Gastrocnemius medialis (tissue), 4 donors: ENCODE measurements at regions of chr16 and their contacts with region 1.

Region 1: DNA sequence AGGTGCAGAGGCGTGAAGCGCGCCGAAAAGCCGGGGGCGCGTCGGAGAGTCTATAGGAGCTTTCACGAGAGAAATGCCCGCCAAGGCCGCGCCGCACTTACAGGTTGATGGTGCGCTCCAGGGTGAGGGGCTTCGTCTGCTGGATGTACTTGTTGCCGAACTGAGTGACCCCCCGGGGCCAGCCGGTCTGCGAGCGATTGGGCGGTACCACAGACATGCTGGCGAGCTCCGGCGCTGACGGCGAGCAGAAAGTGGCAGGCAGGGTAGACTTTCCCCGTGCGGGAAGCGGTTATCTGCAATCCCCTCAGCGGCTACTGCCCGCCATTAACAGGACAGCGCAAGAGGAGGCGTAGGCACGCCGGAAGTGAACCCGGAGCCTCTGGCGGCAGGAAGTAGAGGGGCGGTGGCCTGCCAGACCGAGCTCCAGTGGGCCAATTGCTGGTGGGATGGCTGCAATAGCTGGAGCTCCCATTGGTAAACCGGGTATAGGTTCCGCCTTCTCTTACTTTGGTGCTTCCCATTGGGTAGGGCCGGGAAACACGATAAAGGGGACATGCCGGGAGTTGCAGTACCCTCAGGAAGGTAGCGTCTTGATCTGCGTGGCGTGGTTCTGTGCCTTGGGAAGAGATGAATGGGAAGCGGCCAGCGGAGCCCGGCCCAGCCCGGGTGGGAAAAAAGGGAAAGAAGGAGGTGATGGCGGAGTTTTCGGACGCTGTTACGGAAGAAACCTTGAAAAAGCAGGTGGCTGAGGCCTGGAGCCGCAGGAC is at the starts of genes NUDT21 and OGFOD1:
- DNase-seq: peak; percentile 98
- ATAC-seq: peak; percentile 97 to 98
- H3K4me3 ChIP-seq: peak within 1 kb of the TSS; percentile 87 to 99 (median 92)
- H3K27ac ChIP-seq: peak within 1 kb of the TSS; percentile 85 to 96 (median 94)
- H3K4me1 ChIP-seq: peaks cover 34 to 36% of the 10 kb centered on the region in 2 donors
- H3K27me3 ChIP-seq: no peaks in the 10 kb centered on the region
- CTCF ChIP-seq: no peak
- POLR2A ChIP-seq: peak; percentile 76 to 89
- total RNA-seq, gene NUDT21: 24.3 to 71.5 (median 35.9) TPM
- total RNA-seq, gene OGFOD1: 86.1 to 115 (median 92.9) TPM

Region 2: GRCh38 chr16:55842369-55843104 is 608.6 kb before region 1 on chr16:
- in situ Hi-C with region 1: no loop called
- intact Hi-C with region 1: no loop called
- DNase-seq: no peak
- ATAC-seq: peak; percentile 55 to 69
- H3K4me3 ChIP-seq: no peak overlapping the region
- H3K27ac ChIP-seq: no peak overlapping the region
- H3K4me1 ChIP-seq: no peaks in the 10 kb centered on the region
- H3K27me3 ChIP-seq: peaks cover 0 to 10% (median 3%) of the 10 kb centered on the region in 3 donors
- CTCF ChIP-seq: peak; percentile 57 to 75 (median 61)
- POLR2A ChIP-seq: no peak

Region 3: GRCh38 chr16:56425439-56425832 is 25.7 kb before region 1 on chr16 and contains the start of gene AMFR:
- in situ Hi-C with region 1: no loop called
- intact Hi-C with region 1: loop called (anchors 1 kb)
- DNase-seq: peak; percentile 31 to 84
- ATAC-seq: peak; percentile 88 to 90
- H3K4me3 ChIP-seq: peak within 1 kb of the TSS; percentile 74 to 96 (median 92)
- H3K27ac ChIP-seq: peak within 1 kb of the TSS; percentile 87 to 96 (median 96)
- H3K4me1 ChIP-seq: peaks cover 36 to 37% of the 10 kb centered on the region in 2 donors
- H3K27me3 ChIP-seq: no peaks in the 10 kb centered on the region
- CTCF ChIP-seq: peak in 4 of 5 experiments; percentile 78 to 86 (median 82)
- POLR2A ChIP-seq: peak; percentile 55 to 75
- total RNA-seq, gene AMFR: 349 to 951 (median 571) TPM

Region 4: GRCh38 chr16:56481468-56482112 is 30.4 kb after region 1 on chr16:
- in situ Hi-C with region 1: no loop called
- intact Hi-C with region 1: loop called (anchors 2 kb)
- DNase-seq: peak; percentile 83 to 89
- ATAC-seq: peak; percentile 86 to 91
- H3K4me3 ChIP-seq: no peak overlapping the region
- H3K27ac ChIP-seq: peak overlapping the region; percentile 92 to 98 (median 94)
- H3K4me1 ChIP-seq: peaks cover 38 to 62% of the 10 kb centered on the region in 2 donors
- H3K27me3 ChIP-seq: no peaks in the 10 kb centered on the region
- CTCF ChIP-seq: no peak
- POLR2A ChIP-seq: peak; percentile 45 to 66

Region 5: DNA sequence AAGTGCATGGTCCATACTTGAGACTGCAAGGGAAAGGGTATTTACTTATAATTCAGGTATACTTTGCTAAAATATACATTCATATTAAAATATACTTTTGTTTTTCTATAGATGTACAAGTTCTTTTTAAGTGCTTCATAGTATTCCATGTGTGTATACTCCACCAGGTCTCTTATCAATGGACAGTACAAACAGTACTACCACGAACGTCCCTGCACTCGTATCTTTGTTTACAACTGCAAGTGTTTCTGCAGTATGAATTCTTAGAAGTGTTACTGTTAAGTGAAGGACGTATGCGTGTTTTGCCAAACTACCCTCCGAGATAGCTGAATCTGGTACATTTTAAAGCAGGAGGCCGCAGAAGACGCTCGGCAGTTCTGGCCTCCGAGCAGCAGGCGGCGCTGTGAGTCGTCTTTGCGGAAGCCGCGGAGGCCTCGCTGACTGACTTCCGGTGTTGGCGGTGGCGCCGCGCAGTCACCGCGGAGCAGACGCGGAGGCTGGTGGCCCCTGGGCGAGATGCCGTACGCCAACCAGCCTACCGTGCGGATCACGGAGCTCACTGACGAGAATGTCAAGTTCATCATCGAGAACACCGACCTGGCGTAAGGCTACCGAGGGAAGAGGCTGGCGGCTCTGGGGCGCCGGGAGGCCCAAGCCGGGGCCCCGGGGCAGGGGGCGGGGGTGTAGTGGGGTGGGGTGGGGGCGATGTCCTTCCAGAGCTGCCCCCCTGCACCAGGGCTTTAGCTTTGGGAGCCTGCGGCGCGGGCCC is 1011.2 kb after region 1 on chr16 and contains the start of gene POLR2C:
- in situ Hi-C with region 1: no loop called
- intact Hi-C with region 1: loop called (anchors 5 kb)
- DNase-seq: peak; percentile 66 to 80
- ATAC-seq: peak; percentile 88 to 92
- H3K4me3 ChIP-seq: peak within 1 kb of the TSS; percentile 77 to 96 (median 88)
- H3K27ac ChIP-seq: peak within 1 kb of the TSS; percentile 86 to 92 (median 88)
- H3K4me1 ChIP-seq: peaks cover 15 to 18% of the 10 kb centered on the region in 2 donors
- H3K27me3 ChIP-seq: no peaks in the 10 kb centered on the region
- CTCF ChIP-seq: peak; percentile 89 to 97 (median 96)
- POLR2A ChIP-seq: peak; percentile 80 to 92
- total RNA-seq, gene POLR2C: 97.2 to 162 (median 134) TPM